ENCODE measurements at regions of chr5 and their contacts with region 1.

Region 1: GRCh38 chr5:150217873-150218692 is 28.2 kb downstream of the SLC6A7 start:
- DNase-seq: peak; percentile 28
- ATAC-seq: peak; percentile 99
- H3K4me3 ChIP-seq: no peak overlapping the region
- H3K27ac ChIP-seq: no peak overlapping the region
- H3K4me1 ChIP-seq: no peaks in the 10 kb centered on the region
- H3K27me3 ChIP-seq: peaks cover 2 to 4% of the 10 kb centered on the region in 2 experiments; a peak in 3 of 4 replicates
- CTCF ChIP-seq: peak; percentile 75 to 94 (median 87)
- EP300 ChIP-seq: no peak
- POLR2A ChIP-seq: no peak
- RAD21 ChIP-seq: peak; percentile 93

Region 2: GRCh38 chr5:149636851-149637246 is 581.2 kb before region 1 on chr5:
- CTCF ChIA-PET with region 1: no interaction called
- POLR2A ChIA-PET with region 1: no interaction called
- RAD21 ChIA-PET with region 1: no interaction called
- SMC1A ChIA-PET with region 1: no interaction called
- in situ Hi-C with region 1: loop called (anchors 10 kb)
- intact Hi-C with region 1: loop called (anchors 10 kb)
- DNase-seq: no peak
- ATAC-seq: peak; percentile 85
- H3K4me3 ChIP-seq: no peak overlapping the region
- H3K27ac ChIP-seq: no peak overlapping the region
- H3K4me1 ChIP-seq: peaks cover 12% of the 10 kb centered on the region
- H3K27me3 ChIP-seq: no peaks in the 10 kb centered on the region
- CTCF ChIP-seq: peak; percentile 74 to 78 (median 77)
- EP300 ChIP-seq: no peak
- POLR2A ChIP-seq: no peak
- RAD21 ChIP-seq: peak; percentile 87

Region 3: DNA sequence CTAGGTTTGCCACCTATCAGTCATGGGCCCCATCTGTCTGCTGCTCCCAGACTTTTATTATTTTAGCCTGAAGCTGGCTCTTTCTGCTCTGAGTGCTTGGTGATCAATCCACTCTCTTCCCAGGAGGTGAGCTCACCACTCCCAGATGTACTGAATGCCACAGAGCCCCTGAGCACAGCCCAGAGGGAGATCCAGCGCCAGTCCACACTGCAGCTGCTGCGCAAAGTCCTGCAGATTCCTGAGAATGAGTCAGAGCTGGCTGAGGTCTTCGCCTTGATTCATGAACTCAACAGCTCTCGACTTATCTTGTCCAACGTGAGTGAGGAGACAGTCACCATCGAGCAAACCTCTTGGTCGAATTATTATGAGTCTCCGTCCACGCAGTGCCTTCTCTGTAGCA is 181.6 kb before region 1 on chr5:
- CTCF ChIA-PET with region 1: no interaction called
- POLR2A ChIA-PET with region 1: interaction called, 4 read pairs
- RAD21 ChIA-PET with region 1: no interaction called
- SMC1A ChIA-PET with region 1: interaction called, 3 read pairs
- in situ Hi-C with region 1: no loop called
- intact Hi-C with region 1: loop called (anchors 5 kb)
- DNase-seq: no peak
- ATAC-seq: no peak
- H3K4me3 ChIP-seq: no peak overlapping the region
- H3K27ac ChIP-seq: no peak overlapping the region
- H3K4me1 ChIP-seq: peaks cover 7% of the 10 kb centered on the region
- H3K27me3 ChIP-seq: no peaks in the 10 kb centered on the region
- CTCF ChIP-seq: no peak
- EP300 ChIP-seq: no peak
- POLR2A ChIP-seq: no peak
- RAD21 ChIP-seq: no peak

Region 4: DNA sequence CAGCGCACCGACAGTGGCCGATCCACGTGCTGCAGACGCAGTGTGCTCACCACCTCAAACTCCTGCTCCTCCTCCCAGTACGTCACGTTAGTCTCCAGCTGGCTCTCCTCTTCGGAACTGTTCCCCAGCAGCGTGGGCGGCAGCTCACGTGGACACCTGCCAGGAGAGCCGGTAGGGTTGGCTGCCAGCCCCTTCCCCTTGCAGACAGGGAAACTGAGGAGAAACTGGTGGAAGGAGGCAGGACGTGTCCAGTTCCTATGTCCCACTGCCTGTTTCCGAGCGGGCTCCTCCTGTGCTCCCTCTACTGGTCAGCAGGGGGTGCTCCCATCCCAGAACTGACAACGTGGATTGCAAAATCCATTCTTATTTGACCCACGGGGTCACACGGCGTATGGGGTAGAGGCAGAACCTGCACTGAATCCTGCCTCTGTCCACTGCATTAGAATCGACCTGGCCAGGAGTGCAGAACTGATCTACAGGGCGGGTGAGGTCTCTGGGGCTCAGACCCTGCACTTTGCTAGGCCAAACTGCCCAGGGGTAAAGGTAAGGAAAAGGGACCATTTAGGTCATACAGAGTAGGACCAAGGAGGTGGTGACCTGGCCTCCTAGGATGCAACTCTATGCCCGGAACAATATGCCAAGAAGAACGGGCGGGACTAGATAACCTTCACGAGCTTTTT is 88.1 kb before region 1 on chr5:
- CTCF ChIA-PET with region 1: interaction called, 30 read pairs
- POLR2A ChIA-PET with region 1: interaction called, 4 read pairs
- RAD21 ChIA-PET with region 1: interaction called, 9 read pairs
- SMC1A ChIA-PET with region 1: interaction called, 22 read pairs
- in situ Hi-C with region 1: loop called (anchors 5 kb)
- intact Hi-C with region 1: loop called (anchors 1 kb)
- DNase-seq: no peak
- ATAC-seq: peak; percentile 93
- H3K4me3 ChIP-seq: no peak overlapping the region
- H3K27ac ChIP-seq: no peak overlapping the region
- H3K4me1 ChIP-seq: no peaks in the 10 kb centered on the region
- H3K27me3 ChIP-seq: no peaks in the 10 kb centered on the region
- CTCF ChIP-seq: peak; percentile 88 to 92 (median 91)
- EP300 ChIP-seq: no peak
- POLR2A ChIP-seq: no peak
- RAD21 ChIP-seq: peak; percentile 92

Region 5: GRCh38 chr5:150135557-150136304 is 82.4 kb before region 1 on chr5:
- CTCF ChIA-PET with region 1: interaction called, 30 read pairs
- POLR2A ChIA-PET with region 1: no interaction called
- RAD21 ChIA-PET with region 1: interaction called, 9 read pairs
- SMC1A ChIA-PET with region 1: interaction called, 22 read pairs
- in situ Hi-C with region 1: no loop called
- intact Hi-C with region 1: loop called (anchors 1 kb)
- DNase-seq: no peak
- ATAC-seq: no peak
- H3K4me3 ChIP-seq: no peak overlapping the region
- H3K27ac ChIP-seq: no peak overlapping the region
- H3K4me1 ChIP-seq: no peaks in the 10 kb centered on the region
- H3K27me3 ChIP-seq: no peaks in the 10 kb centered on the region
- CTCF ChIP-seq: no peak
- EP300 ChIP-seq: no peak
- POLR2A ChIP-seq: no peak
- RAD21 ChIP-seq: no peak

Region 6: DNA sequence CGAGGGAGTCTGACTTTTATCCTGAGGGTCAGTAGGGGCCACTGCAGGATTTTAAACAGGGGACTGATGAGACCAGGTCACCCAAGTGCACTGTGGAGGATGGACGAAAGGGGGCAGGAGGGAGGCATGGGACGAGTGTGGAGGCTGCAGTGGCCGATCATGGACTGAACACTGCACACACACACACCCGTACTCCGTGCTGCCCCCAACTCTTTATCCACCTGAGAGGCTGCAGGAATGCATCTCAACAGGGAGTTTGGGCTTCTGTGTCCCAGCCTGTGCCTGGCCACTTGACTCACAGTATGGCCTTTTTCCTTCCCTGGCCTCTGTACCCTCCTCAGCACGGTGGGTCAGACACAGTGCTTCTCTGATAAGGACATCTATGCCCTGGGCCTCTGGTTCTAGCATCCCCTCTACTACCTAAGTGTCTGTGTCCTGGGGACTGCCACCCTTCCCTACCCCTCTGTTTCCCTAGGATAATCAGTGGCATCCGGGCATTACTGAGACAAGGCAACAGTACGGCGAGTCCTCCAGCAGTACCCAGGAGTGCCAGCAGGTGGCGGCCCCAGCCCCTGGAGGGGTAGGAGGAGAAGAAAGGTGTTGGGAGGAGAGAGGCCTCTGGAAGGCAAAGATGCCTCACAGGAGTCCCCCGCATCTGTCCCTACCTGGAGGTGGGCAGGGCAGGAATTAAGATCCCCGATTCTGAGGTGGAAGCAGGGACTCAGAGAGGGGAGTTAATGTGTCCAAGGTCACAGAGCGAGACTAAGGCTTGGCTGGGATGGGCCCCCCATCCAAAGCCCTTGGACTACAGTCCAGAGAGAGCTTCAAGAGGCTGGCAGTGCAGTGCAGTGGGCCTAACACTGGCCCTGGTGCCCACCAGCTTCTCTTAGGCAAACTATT is 56.6 kb before region 1 on chr5:
- CTCF ChIA-PET with region 1: interaction called, 16 read pairs
- POLR2A ChIA-PET with region 1: no interaction called
- RAD21 ChIA-PET with region 1: interaction called, 5 read pairs
- SMC1A ChIA-PET with region 1: interaction called, 3 read pairs
- in situ Hi-C with region 1: no loop called
- intact Hi-C with region 1: loop called (anchors 1 kb)
- DNase-seq: no peak
- ATAC-seq: peak; percentile 92
- H3K4me3 ChIP-seq: no peak overlapping the region
- H3K27ac ChIP-seq: no peak overlapping the region
- H3K4me1 ChIP-seq: peaks cover 9% of the 10 kb centered on the region
- H3K27me3 ChIP-seq: no peaks in the 10 kb centered on the region; a peak in 1 of 4 replicates
- CTCF ChIP-seq: peak; percentile 93 to 99 (median 93)
- EP300 ChIP-seq: no peak
- POLR2A ChIP-seq: no peak
- RAD21 ChIP-seq: peak; percentile 78

Region 7: DNA sequence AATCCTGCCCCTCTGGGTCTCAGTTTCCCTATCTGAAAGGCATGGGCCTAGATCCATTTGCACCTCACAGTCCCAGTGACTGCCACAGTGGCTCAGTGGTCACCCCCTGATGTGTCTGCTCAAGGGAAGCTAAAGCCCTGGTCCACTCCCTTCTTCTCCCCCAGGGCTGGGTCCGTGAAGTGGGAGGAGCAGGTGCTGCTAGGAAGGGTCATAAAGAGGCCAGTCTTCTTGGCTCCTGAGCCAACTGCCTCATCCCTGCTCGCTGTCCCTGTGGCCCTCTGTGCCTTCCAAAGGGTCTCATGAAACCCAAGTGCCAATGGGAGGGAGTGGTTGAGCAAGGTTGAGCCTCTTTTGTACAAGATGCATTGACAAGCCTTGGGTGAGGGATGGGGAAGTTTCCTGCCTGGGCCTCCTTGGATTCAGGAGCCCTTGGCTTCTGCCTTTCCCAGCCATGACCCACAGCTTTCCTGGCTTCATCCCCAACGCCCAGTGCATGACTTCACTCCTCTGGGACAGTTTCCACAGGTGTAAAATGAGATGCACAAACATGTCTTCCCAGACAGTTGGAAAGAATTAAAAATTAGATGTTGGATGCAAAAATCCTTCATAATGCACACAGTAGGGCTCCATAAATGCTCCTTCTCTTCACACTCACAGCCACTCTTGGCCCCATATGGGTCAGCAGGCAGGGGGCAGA is 29.8 kb before region 1 on chr5:
- CTCF ChIA-PET with region 1: no interaction called
- POLR2A ChIA-PET with region 1: no interaction called
- RAD21 ChIA-PET with region 1: no interaction called
- SMC1A ChIA-PET with region 1: no interaction called
- in situ Hi-C with region 1: no loop called
- intact Hi-C with region 1: no loop called
- DNase-seq: no peak
- ATAC-seq: no peak
- H3K4me3 ChIP-seq: no peak overlapping the region
- H3K27ac ChIP-seq: no peak overlapping the region
- H3K4me1 ChIP-seq: no peaks in the 10 kb centered on the region
- H3K27me3 ChIP-seq: peaks cover 0 to 5% of the 10 kb centered on the region in 2 experiments; a peak in 3 of 4 replicates
- CTCF ChIP-seq: no peak
- EP300 ChIP-seq: no peak
- POLR2A ChIP-seq: no peak
- RAD21 ChIP-seq: no peak

Region 8: GRCh38 chr5:150350524-150351344 is 132.7 kb after region 1 on chr5:
- CTCF ChIA-PET with region 1: interaction called, 13 read pairs
- POLR2A ChIA-PET with region 1: no interaction called
- RAD21 ChIA-PET with region 1: no interaction called
- SMC1A ChIA-PET with region 1: interaction called, 7 read pairs
- in situ Hi-C with region 1: no loop called
- intact Hi-C with region 1: loop called (anchors 1 kb)
- DNase-seq: peak; percentile 13
- ATAC-seq: peak; percentile 99
- H3K4me3 ChIP-seq: no peak overlapping the region
- H3K27ac ChIP-seq: no peak overlapping the region
- H3K4me1 ChIP-seq: peaks cover 8% of the 10 kb centered on the region; the same call in 1 of the 2 replicates
- H3K27me3 ChIP-seq: no peaks in the 10 kb centered on the region
- CTCF ChIP-seq: peak; percentile 69 to 79 (median 73)
- EP300 ChIP-seq: no peak
- POLR2A ChIP-seq: no peak
- RAD21 ChIP-seq: peak; percentile 74

Measured in GM12878 (cell line).